Endothelial cell of umbilical vein (primary cell): ENCODE measurements at regions of chr17 and their contacts with region 1.

Region 1: DNA sequence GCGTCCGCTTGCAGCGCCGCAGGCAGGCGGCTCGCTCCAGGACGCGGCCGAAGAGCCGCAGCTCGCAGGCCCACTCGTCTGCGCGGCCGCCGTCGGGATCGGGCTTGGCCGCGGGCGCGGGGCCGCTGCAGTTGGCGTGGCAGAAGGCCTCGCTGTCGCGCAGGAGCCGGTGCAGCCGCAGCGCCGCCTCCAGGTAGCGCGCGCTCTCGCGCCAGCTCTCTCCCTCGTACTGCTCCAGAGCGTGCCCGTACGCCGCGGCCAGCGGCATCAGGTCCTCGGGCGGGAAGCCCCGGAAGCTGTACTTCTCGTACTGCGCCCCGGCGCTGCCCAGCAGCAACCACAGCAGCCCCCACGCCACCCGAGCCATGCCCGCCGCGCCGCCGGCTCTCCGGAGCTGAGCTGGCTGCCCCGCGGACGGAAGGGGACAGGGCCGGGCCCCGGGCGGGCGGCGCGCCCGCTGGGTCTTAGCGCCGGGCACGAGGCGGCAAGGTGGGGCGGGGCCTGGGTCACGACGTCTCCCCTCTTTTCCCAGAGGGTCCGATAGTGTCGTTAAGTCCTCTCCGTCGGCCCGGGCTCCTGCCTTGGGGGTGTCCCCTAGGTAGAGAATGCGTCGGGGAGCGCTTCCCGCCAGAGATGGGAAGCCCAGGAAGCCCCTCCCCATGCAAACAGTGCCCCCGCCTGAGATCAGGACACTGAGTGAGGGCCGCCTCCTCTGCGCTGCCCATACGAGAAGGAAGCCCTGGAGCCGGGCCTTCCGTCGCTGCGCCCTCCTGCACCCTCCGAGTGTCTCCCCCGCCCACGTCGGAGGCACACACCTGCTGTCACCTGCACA is at the start of gene P3H4:
- DNase-seq: peak; percentile 84
- H3K4me3 ChIP-seq: peak within 1 kb of the TSS; percentile 51 to 81 (median 78)
- H3K27ac ChIP-seq: peak within 1 kb of the TSS; percentile 46
- H3K4me1 ChIP-seq: peaks cover 26% of the 10 kb centered on the region
- H3K27me3 ChIP-seq: no peaks in the 10 kb centered on the region
- CTCF ChIP-seq: peak; percentile 60 to 85
- POLR2A ChIP-seq: peak; percentile 90
- total RNA-seq, gene P3H4: 37.1 and 39.2 TPM in 2 replicates

Region 2: DNA sequence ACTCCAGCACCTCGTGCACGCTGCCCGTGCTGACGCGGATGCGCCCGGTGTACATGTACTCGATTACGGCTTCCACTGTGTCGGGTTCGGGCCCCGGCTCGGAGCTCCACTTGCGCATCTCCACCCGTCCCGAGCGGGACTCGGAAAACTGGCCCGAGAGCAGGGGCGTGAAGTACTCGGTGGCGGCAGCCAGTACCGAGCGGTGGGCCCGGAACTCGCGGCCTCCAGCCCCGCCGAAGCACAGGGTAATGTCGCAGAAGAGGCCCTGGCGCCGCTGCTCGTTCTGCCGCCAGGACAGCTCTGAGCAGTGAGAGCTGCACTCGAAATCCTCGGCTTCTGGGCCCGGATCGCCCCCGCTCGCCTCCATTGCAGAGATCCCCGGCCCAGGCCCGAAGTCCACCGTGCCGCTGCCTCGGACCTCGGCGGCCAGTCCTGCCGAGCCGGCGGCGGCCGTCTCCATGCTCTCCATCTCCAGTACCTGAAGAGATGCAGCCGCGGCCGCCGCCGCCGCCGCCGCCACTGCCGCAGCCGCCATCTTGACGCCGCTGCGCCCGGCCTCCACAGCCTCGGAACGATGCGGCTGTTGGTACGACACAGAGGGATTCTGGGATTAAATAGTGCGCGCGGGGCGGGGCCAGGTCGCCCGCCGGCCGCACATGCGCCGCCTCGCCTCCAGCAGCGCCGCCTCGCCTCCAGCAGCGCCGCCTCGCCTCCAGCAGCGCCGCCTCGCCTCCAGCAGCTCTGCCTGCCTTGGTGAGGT is 53.3 kb after region 1 on chr17 and contains the start of gene KLHL11:
- CTCF ChIA-PET with region 1: interaction called, 3 read pairs
- POLR2A ChIA-PET with region 1: interaction called, 3 read pairs
- dilution Hi-C with region 1: no loop called
- intact Hi-C with region 1: loop called (anchors 1 kb)
- DNase-seq: peak; percentile 94
- H3K4me3 ChIP-seq: peak within 1 kb of the TSS; percentile 45 to 86 (median 77)
- H3K27ac ChIP-seq: peak within 1 kb of the TSS; percentile 24
- H3K4me1 ChIP-seq: peaks cover 11% of the 10 kb centered on the region
- H3K27me3 ChIP-seq: no peaks in the 10 kb centered on the region
- CTCF ChIP-seq: no peak
- POLR2A ChIP-seq: peak; percentile 95
- total RNA-seq, gene KLHL11: 11.0 and 12.6 TPM in 2 replicates